T-cell (primary cell): ENCODE measurements at regions of chr18 and their contacts with region 1.

Region 1: GRCh38 chr18:75033516-75033915 is 175.4 kb downstream of the PTGR3 start:
- DNase-seq: no peak
- ATAC-seq: no peak
- H3K4me3 ChIP-seq: no peak overlapping the region
- H3K4me3 Mint-ChIP-seq: no peak overlapping the region
- H3K27ac ChIP-seq: no peak overlapping the region
- H3K27ac Mint-ChIP-seq: no peak overlapping the region
- H3K4me1 ChIP-seq: peaks cover 4 to 11% of the 10 kb centered on the region in 2 experiments
- H3K4me1 Mint-ChIP-seq: peaks cover 15 to 20% (median 15%) of the 10 kb centered on the region in 3 donors
- H3K27me3 ChIP-seq: no peaks in the 10 kb centered on the region
- H3K27me3 Mint-ChIP-seq: no peaks in the 10 kb centered on the region

Region 2: DNA sequence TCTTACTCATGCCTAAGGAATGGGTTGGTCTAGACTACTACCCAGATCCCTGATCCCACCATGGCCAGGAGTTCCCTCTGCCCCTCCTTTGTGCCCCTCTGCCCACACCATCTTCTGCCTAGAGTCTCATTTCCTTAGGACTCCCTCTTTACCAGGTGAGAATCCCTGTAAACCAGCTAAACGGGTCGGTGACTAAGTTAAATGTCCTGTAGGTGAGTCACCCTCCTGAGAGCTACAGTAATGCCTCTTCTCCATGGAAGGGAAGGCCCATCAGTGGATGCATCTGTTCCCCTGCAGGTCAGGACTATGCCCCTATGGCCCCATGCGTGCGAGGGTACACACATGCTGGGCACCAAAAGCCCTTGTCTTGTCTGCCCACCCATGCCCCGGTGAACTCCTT is 150.0 kb after region 1 on chr18:
- CTCF ChIA-PET with region 1: interaction called in 1 of 2 experiments, 10 read pairs
- POLR2A ChIA-PET with region 1: no interaction called
- DNase-seq: no peak
- ATAC-seq: no peak
- H3K4me3 ChIP-seq: no peak overlapping the region
- H3K4me3 Mint-ChIP-seq: no peak overlapping the region
- H3K27ac ChIP-seq: no peak overlapping the region
- H3K27ac Mint-ChIP-seq: no peak overlapping the region
- H3K4me1 ChIP-seq: no peaks in the 10 kb centered on the region
- H3K4me1 Mint-ChIP-seq: no peaks in the 10 kb centered on the region
- H3K27me3 ChIP-seq: peaks cover 0 to 23% of the 10 kb centered on the region in 2 experiments
- H3K27me3 Mint-ChIP-seq: peaks cover 4 to 7% of the 10 kb centered on the region in 2 donors